Endothelial cell of umbilical vein (primary cell): ENCODE measurements at regions of chr11 and their contacts with region 1.

Region 1: DNA sequence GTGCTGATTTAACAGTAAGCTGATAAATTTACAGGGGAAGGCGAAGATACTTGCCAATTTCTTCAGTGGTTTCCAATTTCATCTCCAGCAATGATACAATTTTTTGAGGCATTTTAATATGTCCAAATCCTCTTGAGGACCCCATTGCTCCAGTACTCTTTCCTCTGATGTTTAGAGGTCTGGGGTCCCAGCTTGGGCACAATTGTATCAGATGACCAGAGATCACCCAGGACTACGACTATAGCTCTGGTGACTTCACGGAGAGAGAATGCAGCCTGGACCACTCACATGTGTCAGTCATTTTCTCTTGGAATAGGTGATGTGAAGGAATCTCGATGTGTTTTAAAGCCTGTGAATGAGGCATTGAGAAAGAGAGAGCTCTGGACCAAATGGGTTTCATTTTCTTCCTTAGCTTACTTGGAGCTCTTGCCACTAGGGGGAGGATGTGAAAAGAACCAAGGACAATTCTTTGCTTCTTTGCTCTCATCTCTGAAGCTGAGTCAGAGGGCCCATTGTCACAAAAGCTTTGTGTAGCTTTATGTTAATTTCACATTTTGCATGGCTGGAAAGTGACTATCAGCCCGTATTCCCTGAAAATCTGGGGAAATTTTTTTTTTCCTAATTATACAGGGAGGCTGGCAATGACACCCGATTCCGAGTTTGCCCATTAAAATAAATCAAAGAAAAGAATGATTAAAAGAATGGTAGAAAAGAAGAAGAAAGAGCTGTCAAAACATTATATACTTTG is 6.7 kb upstream of the CCDC90B start:
- DNase-seq: peak; percentile 46
- H3K4me3 ChIP-seq: no peak overlapping the region
- H3K27ac ChIP-seq: no peak overlapping the region
- H3K4me1 ChIP-seq: no peaks in the 10 kb centered on the region
- H3K27me3 ChIP-seq: peaks cover 4 to 9% of the 10 kb centered on the region in 2 experiments
- CTCF ChIP-seq: peak; percentile 57 to 70
- POLR2A ChIP-seq: no peak

Region 2: GRCh38 chr11:83162377-83162776 is 130.5 kb before region 1 on chr11:
- CTCF ChIA-PET with region 1: no interaction called
- POLR2A ChIA-PET with region 1: no interaction called
- dilution Hi-C with region 1: no loop called
- intact Hi-C with region 1: no loop called
- DNase-seq: no peak
- H3K4me3 ChIP-seq: no peak overlapping the region
- H3K27ac ChIP-seq: no peak overlapping the region
- H3K4me1 ChIP-seq: peaks cover 32% of the 10 kb centered on the region
- H3K27me3 ChIP-seq: no peaks in the 10 kb centered on the region
- CTCF ChIP-seq: no peak
- POLR2A ChIP-seq: no peak

Region 3: DNA sequence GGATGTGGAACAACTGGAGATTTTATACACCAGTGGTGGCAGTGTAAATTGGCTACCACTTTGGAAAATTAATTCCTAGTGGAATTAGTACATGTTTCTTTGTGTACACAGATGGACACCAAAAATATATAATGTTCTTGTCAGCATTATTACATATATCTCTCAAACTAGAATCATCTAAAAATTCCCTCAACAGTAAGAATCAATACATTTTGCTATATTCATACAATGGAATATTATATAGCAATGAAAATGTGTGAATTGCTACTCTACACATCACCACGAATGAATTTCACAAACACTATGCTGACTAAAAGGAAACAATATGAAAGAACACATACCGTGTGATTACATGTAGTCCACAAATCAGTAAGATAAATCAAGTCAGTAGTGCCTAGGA is 40.6 kb before region 1 on chr11:
- CTCF ChIA-PET with region 1: no interaction called
- POLR2A ChIA-PET with region 1: no interaction called
- dilution Hi-C with region 1: no loop called
- intact Hi-C with region 1: no loop called
- DNase-seq: no peak
- H3K4me3 ChIP-seq: no peak overlapping the region
- H3K27ac ChIP-seq: no peak overlapping the region
- H3K4me1 ChIP-seq: peaks cover 2% of the 10 kb centered on the region
- H3K27me3 ChIP-seq: no peaks in the 10 kb centered on the region
- CTCF ChIP-seq: no peak
- POLR2A ChIP-seq: no peak

Region 4: DNA sequence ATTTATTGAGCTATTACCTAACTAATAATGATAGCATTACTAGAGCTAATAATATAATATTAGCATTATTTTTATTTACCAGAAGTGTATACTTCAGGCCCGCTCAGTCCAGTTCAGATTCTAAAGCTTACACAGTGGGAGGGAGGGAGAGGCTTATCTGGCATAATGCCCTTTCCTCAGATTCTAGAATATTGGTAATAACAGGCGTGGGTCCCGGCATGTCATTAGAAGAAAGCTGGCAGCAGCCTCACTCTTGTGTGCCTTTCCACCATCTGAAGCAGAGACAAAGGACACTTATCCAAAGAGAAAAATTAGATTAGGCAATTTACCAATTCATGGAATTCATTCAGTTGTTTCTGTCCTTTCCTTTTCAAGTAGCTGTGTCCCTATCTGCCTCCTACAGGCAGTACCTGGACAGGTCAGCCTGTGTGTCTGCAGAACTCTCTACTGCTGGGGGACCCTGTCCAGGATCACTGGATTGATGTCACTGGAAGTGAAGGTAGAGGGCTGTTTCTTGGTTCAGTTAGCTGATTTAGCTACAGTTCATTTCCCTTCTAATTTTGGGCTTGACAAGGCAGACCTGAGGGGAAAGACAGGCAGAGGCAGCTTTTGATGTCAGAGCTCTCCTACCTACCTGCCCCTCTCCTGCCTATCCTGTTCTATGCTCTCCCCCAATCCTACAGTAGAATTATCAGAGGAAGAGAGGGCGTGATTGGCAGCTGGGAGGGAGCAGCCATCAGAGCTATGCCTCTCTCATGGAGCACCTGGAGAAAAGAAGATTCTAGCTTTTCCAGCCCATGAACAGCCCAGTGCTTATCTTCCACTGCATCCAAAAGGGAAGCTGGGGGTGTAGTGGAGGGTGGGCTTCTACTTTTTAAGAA is 13.6 kb after region 1 on chr11:
- CTCF ChIA-PET with region 1: interaction called, 22 read pairs
- POLR2A ChIA-PET with region 1: no interaction called
- dilution Hi-C with region 1: no loop called
- intact Hi-C with region 1: no loop called
- DNase-seq: no peak
- H3K4me3 ChIP-seq: no peak overlapping the region
- H3K27ac ChIP-seq: no peak overlapping the region
- H3K4me1 ChIP-seq: no peaks in the 10 kb centered on the region
- H3K27me3 ChIP-seq: no peaks in the 10 kb centered on the region
- CTCF ChIP-seq: no peak
- POLR2A ChIP-seq: no peak

Region 5: DNA sequence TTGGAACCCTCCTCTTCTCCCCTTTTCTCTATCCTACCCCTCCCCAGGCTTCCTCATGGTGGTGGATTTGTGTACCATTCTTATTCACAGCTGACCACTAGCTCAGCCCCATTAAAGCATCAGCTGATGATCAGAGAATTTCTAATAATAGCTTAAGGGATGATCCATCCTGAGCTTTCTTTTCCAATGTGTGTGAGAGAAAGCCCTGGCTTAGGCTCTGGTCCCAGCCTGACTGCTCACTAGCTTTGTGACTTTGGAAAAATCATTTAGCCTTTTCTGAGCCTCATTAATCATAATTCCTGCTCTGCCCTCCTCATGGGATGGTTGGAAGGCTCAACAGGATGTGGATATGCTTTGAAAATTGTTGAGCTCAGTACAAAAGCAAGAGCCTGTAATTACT is 19.5 kb after region 1 on chr11:
- CTCF ChIA-PET with region 1: interaction called, 22 read pairs
- POLR2A ChIA-PET with region 1: no interaction called
- dilution Hi-C with region 1: no loop called
- intact Hi-C with region 1: no loop called
- DNase-seq: no peak
- H3K4me3 ChIP-seq: no peak overlapping the region
- H3K27ac ChIP-seq: no peak overlapping the region
- H3K4me1 ChIP-seq: no peaks in the 10 kb centered on the region
- H3K27me3 ChIP-seq: no peaks in the 10 kb centered on the region
- CTCF ChIP-seq: no peak
- POLR2A ChIP-seq: no peak

Region 6: GRCh38 chr11:83317757-83318690 is 25.1 kb after region 1 on chr11:
- CTCF ChIA-PET with region 1: interaction called, 12 read pairs
- POLR2A ChIA-PET with region 1: no interaction called
- dilution Hi-C with region 1: no loop called
- intact Hi-C with region 1: no loop called
- DNase-seq: no peak
- H3K4me3 ChIP-seq: no peak overlapping the region
- H3K27ac ChIP-seq: no peak overlapping the region
- H3K4me1 ChIP-seq: no peaks in the 10 kb centered on the region
- H3K27me3 ChIP-seq: no peaks in the 10 kb centered on the region
- CTCF ChIP-seq: no peak
- POLR2A ChIP-seq: no peak

Region 7: DNA sequence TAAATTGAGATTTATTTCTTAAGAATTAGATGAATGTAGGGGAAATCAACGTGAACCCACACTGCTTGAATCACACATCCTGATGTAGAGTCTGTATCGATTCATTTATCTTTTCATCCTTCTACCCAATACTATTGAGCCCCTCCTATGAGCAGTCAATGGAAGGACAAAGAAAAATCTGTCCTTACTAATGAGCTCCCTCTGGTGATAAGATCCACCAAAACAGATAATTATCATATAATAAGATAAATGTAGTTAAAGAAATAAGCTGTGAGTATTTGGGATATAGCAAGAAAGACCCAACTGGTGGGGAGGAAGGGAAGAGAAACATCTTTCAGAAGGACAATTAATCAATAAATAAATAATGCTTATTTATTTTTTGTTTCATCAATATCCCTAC is 378.4 kb after region 1 on chr11:
- CTCF ChIA-PET with region 1: interaction called, 12 read pairs
- POLR2A ChIA-PET with region 1: no interaction called
- dilution Hi-C with region 1: no loop called
- intact Hi-C with region 1: no loop called
- DNase-seq: no peak
- H3K4me3 ChIP-seq: no peak overlapping the region
- H3K27ac ChIP-seq: no peak overlapping the region
- H3K4me1 ChIP-seq: no peaks in the 10 kb centered on the region
- H3K27me3 ChIP-seq: no peaks in the 10 kb centered on the region
- CTCF ChIP-seq: no peak
- POLR2A ChIP-seq: no peak

Region 8: GRCh38 chr11:83724008-83724461 is 431.2 kb after region 1 on chr11:
- CTCF ChIA-PET with region 1: interaction called, 60 read pairs
- POLR2A ChIA-PET with region 1: no interaction called
- dilution Hi-C with region 1: no loop called
- intact Hi-C with region 1: loop called (anchors 1 kb)
- DNase-seq: peak; percentile 65
- H3K4me3 ChIP-seq: peak overlapping the region in 2 of 3 experiments; percentile 23 to 34
- H3K27ac ChIP-seq: no peak overlapping the region
- H3K4me1 ChIP-seq: no peaks in the 10 kb centered on the region
- H3K27me3 ChIP-seq: peaks cover 12 to 17% of the 10 kb centered on the region in 2 experiments
- CTCF ChIP-seq: no peak
- POLR2A ChIP-seq: no peak

Region 9: GRCh38 chr11:83819933-83820549 is 527.2 kb after region 1 on chr11:
- CTCF ChIA-PET with region 1: interaction called, 113 read pairs
- POLR2A ChIA-PET with region 1: no interaction called
- dilution Hi-C with region 1: no loop called
- intact Hi-C with region 1: loop called (anchors 1 kb)
- DNase-seq: peak; percentile 65
- H3K4me3 ChIP-seq: no peak overlapping the region
- H3K27ac ChIP-seq: no peak overlapping the region
- H3K4me1 ChIP-seq: no peaks in the 10 kb centered on the region
- H3K27me3 ChIP-seq: peaks cover 0 to 2% of the 10 kb centered on the region in 2 experiments
- CTCF ChIP-seq: peak; percentile 18 to 23
- POLR2A ChIP-seq: no peak